A549 (cell line): ENCODE measurements at regions of chr11 and their contacts with region 1.

Region 1: GRCh38 chr11:12963792-12964536 is 45.2 kb upstream of the RASSF10 start:
- DNase-seq: peak; percentile 70 to 91
- ATAC-seq: peak; percentile 88 to 98
- H3K4me3 ChIP-seq: no peak overlapping the region
- H3K27ac ChIP-seq: peak overlapping the region; percentile 43 to 70; a peak in 4 of 6 replicates
- H3K4me1 ChIP-seq: peaks cover 14% of the 10 kb centered on the region
- CTCF ChIP-seq: peak; percentile 91
- EP300 ChIP-seq: no peak
- POLR2A ChIP-seq: no peak
- RAD21 ChIP-seq: peak; percentile 98 to 99

Region 2: DNA sequence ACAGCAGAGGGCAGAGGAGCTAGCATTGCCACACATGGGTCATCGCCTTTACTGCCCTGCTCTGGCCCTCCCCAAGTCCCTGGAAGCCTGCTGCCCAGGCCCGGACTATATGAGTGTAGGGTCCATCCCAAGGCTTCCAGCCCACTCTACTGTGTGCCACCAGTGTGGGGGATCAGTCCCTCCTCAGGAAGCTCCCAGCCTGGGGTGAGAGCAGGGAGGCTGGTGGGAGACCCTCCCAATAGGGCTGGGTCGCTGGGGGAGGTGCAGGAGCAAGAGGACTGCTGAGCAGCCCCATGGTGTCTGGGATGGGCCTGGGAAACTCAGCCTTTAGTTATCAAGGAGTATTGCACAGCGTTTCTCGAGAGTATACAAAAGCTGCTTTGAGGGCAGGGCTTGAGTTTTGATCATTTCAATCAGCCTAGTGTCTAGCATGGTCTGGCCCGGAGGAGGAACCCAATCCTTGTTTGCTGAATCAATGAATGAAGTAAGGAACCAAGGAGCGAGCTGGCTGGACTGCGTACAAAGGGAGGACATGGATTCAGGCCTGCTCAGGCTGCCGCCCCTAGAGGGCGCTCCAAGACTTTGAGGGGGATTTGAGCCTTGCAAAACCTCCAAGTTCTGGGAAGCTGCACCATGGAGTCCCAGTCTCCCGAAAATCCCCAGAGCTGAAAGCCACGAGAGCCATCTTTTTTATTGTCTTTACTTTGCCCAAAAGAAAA is 675.6 kb before region 1 on chr11:
- CTCF ChIA-PET with region 1: interaction called, 47 read pairs
- POLR2A ChIA-PET with region 1: no interaction called
- DNase-seq: peak; percentile 88 to 90
- ATAC-seq: peak; percentile 43 to 77
- H3K4me3 ChIP-seq: no peak overlapping the region
- H3K27ac ChIP-seq: peak overlapping the region; percentile 94 to 99
- H3K4me1 ChIP-seq: peaks cover 46% of the 10 kb centered on the region
- CTCF ChIP-seq: peak; percentile 97
- EP300 ChIP-seq: no peak
- POLR2A ChIP-seq: no peak
- RAD21 ChIP-seq: peak; percentile 93 to 96

Region 3: GRCh38 chr11:12979928-12980689 is 16.1 kb after region 1 on chr11:
- CTCF ChIA-PET with region 1: interaction called, 123 read pairs
- POLR2A ChIA-PET with region 1: interaction called, 3 read pairs
- DNase-seq: no peak
- ATAC-seq: peak in 1 of 2 experiments; percentile 30; a peak in 2 of 6 replicates
- H3K4me3 ChIP-seq: no peak overlapping the region
- H3K27ac ChIP-seq: no peak overlapping the region; a peak in 1 of 6 replicates
- H3K4me1 ChIP-seq: no peaks in the 10 kb centered on the region; the same call in 2 of the 3 replicates
- CTCF ChIP-seq: no peak
- EP300 ChIP-seq: no peak
- POLR2A ChIP-seq: no peak
- RAD21 ChIP-seq: no peak

Region 4: DNA sequence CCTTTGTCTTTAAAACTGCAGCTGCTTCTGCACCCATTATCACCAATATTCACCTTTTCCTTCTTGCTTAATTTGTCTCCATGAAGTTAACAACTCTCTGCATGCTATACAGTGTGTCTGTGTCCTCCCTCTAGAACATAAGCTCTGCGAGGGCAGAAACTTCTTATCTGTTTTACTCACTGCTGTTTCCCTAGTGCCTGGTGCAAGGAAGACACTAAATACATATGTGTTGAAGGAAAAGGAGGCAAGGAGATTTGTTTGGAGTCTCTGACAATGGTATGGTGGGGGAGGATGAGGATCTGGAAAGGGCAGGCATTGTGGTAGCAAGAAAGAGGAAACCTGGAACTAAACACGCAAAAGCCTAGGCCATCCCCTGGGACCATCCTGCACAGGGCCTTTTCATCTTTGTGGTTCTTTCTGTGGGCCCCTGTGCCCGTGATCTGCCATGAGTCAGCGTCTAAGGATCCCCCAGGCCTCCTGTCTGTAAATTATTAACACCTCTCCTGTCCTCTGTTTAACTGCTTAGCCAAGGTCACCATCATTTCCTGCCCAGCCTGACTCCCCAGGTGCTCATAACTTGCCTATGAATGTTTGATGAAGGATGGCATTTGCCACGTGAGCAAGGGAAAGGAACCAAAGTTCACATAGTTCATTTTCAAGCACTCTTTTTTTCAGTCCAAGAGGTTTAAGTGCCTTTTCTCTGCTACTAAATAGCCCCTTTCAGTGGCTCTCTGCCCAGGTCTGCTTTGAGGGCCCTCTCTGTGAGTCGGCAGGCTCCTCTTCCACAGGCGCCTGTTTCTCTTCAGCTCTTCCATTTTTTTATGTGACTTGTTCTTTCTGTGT is 176.3 kb after region 1 on chr11:
- CTCF ChIA-PET with region 1: interaction called, 17 read pairs
- POLR2A ChIA-PET with region 1: no interaction called
- DNase-seq: peak; percentile 81 to 96
- ATAC-seq: peak; percentile 92 to 94
- H3K4me3 ChIP-seq: no peak overlapping the region
- H3K27ac ChIP-seq: peak overlapping the region; percentile 98 to 99
- H3K4me1 ChIP-seq: peaks cover 45% of the 10 kb centered on the region
- CTCF ChIP-seq: no peak
- EP300 ChIP-seq: peak; percentile 90 to 95; a peak in 4 of 5 replicates
- POLR2A ChIP-seq: no peak
- RAD21 ChIP-seq: peak; percentile 32 to 64; a peak in 4 of 5 replicates

Region 5: GRCh38 chr11:13160346-13160745 is 196.4 kb after region 1 on chr11:
- CTCF ChIA-PET with region 1: interaction called, 141 read pairs
- POLR2A ChIA-PET with region 1: no interaction called
- DNase-seq: no peak
- ATAC-seq: no peak
- H3K4me3 ChIP-seq: no peak overlapping the region
- H3K27ac ChIP-seq: no peak overlapping the region
- H3K4me1 ChIP-seq: no peaks in the 10 kb centered on the region
- CTCF ChIP-seq: no peak
- EP300 ChIP-seq: no peak
- POLR2A ChIP-seq: no peak
- RAD21 ChIP-seq: no peak

Region 6: DNA sequence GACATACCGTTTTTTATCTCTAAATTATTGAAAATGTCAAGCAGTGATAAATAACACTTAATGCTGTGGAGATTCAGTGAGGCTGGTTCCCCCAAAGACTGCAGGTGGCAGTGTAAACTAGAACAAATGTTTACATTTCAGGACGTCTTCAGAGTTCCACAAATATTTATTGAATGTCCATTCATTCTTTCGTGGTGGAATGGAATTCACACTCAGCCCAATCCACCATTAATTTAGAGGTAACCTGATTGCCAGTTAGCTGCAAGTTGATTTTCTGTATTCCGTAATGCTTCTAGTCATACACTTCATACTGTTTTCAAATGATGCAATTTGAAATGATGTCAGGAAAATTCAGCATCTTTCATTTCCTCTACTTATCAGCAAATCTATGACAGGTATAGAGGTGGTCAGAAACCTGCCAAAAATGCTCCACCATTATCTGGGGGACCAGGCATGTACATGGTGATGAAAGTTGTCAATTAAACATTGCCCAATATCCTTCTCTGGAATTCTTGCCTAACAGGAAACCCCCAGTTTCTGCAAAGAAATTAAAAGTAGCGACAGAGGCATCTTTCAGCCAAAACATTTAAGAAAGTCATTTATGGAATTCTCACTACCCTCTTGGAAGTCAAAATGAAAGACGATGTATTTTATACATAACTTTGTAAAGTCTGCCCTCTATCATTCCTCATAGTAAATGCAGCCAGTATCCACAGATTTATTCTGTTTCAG is 219.3 kb after region 1 on chr11:
- CTCF ChIA-PET with region 1: interaction called, 83 read pairs
- POLR2A ChIA-PET with region 1: no interaction called
- DNase-seq: peak; percentile 48 to 53
- ATAC-seq: peak; percentile 85 to 92
- H3K4me3 ChIP-seq: peak overlapping the region; percentile 42
- H3K27ac ChIP-seq: peak overlapping the region; percentile 54 to 69; a peak in 5 of 6 replicates
- H3K4me1 ChIP-seq: peaks cover 6% of the 10 kb centered on the region
- CTCF ChIP-seq: peak; percentile 60
- EP300 ChIP-seq: no peak
- POLR2A ChIP-seq: no peak
- RAD21 ChIP-seq: peak; percentile 76 to 80